Activated CD4-positive, alpha-beta T cell treated with anti-CD3 and anti-CD28 coated beads for 36 hours (primary cell): ENCODE measurements at regions of chr1 and their contacts with region 1.

Region 1: DNA sequence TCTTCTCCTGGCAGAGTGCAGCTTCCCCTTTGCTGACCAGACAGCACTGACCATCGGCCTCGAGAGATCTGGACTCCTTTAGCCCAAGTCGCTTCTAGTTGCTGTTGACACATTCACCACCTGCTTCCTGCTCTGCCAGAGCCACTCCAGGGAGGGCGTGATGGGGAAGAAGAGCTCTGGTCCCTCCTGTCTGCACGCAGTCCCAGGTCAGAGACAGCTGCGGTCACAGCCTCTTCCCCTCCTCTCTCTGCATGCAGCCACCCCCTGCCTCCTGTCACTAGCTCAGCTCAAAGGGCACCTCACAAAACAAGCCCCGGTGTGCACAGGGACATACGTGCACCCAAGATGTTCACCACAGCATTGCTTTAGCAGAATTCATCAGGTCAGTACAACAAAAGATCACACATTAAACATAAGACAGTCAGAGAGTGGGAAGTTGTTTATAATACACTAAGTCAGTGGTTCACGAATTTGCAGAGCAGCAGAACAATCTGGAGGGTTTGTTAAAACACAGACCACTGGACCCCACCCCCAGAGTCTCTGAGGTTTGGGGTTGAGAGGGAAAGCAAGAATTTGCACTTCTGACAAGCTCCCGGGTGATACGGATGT is 132.9 kb downstream of the SYF2 start:
- DNase-seq: peak; percentile 52
- ATAC-seq: peak; percentile 54
- H3K4me3 Mint-ChIP-seq: no peak overlapping the region
- H3K27ac Mint-ChIP-seq: peak overlapping the region; percentile 62
- H3K4me1 Mint-ChIP-seq: peaks cover 58% of the 10 kb centered on the region
- H3K27me3 Mint-ChIP-seq: no peaks in the 10 kb centered on the region

Region 2: DNA sequence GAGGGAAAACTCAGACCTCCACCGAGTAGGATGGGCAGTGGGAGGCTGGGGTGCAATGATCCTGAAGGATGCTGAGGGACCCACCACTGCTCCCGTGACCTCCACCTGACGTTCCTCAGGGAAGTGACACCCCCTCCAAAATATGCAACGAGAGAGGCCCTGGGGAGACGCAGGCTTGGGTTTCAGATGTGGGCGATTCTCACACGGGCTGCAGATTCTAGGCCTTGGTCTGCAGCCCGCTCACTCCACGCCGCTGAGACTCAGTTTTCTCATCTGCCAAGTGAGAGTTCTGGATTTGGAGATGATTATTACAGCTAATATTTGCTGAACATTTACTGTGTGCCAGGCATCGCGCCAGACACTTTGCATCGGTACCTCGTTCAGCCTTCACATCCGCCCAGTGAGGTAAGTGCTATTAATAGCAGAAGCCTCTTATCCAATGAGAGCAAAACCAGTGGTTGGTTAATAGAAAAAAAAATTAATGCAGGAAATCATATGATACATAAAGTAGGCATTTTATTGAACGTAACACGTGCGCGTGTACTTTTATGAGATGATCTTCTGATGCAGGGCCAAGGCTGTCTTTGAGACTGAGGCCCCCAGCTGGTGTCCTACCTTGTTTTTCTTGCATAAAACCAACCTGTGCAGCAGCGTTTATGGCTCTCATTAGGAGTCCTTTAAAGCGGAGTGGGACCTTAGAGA is 67.3 kb before region 1 on chr1:
- CTCF ChIA-PET with region 1: interaction called, 4 read pairs
- POLR2A ChIA-PET with region 1: no interaction called
- intact Hi-C with region 1: loop called (anchors 2 to 5 kb)
- DNase-seq: peak; percentile 70
- ATAC-seq: peak; percentile 25
- H3K4me3 Mint-ChIP-seq: no peak overlapping the region
- H3K27ac Mint-ChIP-seq: no peak overlapping the region
- H3K4me1 Mint-ChIP-seq: peaks cover 74% of the 10 kb centered on the region
- H3K27me3 Mint-ChIP-seq: no peaks in the 10 kb centered on the region

Region 3: GRCh38 chr1:25037174-25038074 is 62.0 kb before region 1 on chr1:
- CTCF ChIA-PET with region 1: interaction called, 4 read pairs
- POLR2A ChIA-PET with region 1: no interaction called
- intact Hi-C with region 1: loop called (anchors 2 to 5 kb)
- DNase-seq: peak; percentile 86
- ATAC-seq: peak; percentile 55
- H3K4me3 Mint-ChIP-seq: no peak overlapping the region
- H3K27ac Mint-ChIP-seq: peak overlapping the region; percentile 27
- H3K4me1 Mint-ChIP-seq: peaks cover 35% of the 10 kb centered on the region
- H3K27me3 Mint-ChIP-seq: no peaks in the 10 kb centered on the region

Region 4: GRCh38 chr1:25117233-25117823 is 17.9 kb after region 1 on chr1:
- CTCF ChIA-PET with region 1: interaction called, 17 read pairs
- POLR2A ChIA-PET with region 1: no interaction called
- intact Hi-C with region 1: no loop called
- DNase-seq: peak; percentile 70
- ATAC-seq: no peak
- H3K4me3 Mint-ChIP-seq: no peak overlapping the region
- H3K27ac Mint-ChIP-seq: no peak overlapping the region
- H3K4me1 Mint-ChIP-seq: peaks cover 28% of the 10 kb centered on the region
- H3K27me3 Mint-ChIP-seq: peaks cover 4% of the 10 kb centered on the region